ENCODE measurements at regions of chr11 and their contacts with region 1.

Region 1: DNA sequence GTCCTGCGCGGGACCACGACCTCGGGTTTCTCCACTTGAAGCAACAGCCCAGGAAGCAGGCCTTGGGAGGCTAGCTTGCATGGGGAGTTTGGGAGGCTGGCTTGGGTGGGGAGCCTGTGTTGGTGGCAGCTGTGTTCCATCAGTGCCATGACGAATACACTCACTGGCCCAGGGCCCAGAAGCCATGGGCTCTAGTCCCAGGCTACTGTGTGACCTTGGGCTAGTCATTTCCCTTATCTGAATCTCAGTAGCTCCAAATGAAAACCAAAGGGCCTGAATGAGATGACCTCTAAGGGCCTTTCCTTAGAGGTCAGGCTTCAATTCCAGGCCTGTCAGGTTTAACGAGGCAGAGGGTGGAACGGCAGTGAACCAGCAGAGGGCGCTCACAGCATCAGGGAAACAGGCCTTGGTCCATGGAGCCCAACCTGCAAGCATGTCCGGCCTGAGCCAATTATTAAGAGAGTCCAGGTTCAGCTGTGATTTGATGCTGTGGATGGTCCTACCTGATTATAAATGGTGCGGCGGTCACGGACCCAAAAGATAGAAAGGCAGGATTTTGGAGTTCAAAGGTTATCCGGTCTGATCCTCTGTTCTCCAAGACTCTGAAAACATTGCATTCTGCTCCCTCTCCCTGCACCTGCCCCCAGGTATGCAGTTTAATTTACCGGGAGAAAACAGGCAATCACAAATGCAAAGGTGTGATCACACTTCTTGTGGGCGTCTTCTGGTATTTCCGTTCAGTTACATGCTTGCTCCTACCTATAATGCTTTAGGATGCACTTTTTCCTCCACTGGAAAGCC is 15.9 kb downstream of the PTPN5 start:
- DNase-seq: peak; percentile 78
- H3K4me3 ChIP-seq: no peak overlapping the region
- H3K27ac ChIP-seq: no peak overlapping the region
- H3K4me1 ChIP-seq: no peaks in the 10 kb centered on the region
- H3K27me3 ChIP-seq: no peaks in the 10 kb centered on the region
- CTCF ChIP-seq: peak; percentile 59

Region 2: DNA sequence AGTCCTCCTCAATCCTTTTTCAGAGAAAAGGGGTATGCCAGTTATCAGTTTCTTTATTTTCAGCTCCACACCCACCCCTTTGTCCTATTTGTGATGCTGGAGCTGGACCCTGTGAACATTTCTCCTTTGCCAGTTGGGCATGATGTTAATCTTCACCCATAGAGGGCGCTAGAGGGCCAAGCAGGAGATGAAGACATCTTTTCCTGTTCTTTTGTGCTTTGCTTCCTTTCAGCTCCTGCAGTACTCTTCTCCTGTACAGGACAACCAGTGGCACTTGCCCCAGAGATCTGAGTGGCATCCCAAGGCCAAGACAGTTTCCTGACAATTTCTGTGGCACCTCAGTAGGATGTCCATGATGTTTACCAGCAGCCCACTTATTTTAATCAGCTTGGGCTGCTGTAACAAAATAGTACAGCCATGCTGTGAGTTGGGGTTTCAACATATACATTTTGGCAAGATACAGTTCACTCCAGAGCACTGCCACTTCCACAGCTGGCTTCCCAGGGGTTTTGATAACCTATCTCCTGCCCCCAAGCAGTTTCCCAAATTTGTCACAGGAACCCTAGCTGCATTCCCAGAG is 531.8 kb before region 1 on chr11:
- intact Hi-C with region 1: no loop called
- DNase-seq: peak; percentile 76
- H3K4me3 ChIP-seq: no peak overlapping the region
- H3K27ac ChIP-seq: no peak overlapping the region
- H3K4me1 ChIP-seq: no peaks in the 10 kb centered on the region
- H3K27me3 ChIP-seq: no peaks in the 10 kb centered on the region
- CTCF ChIP-seq: peak; percentile 78

Region 3: GRCh38 chr11:18853086-18853720 is 77.5 kb after region 1 on chr11:
- intact Hi-C with region 1: loop called (anchors 10 kb)
- DNase-seq: no peak
- H3K4me3 ChIP-seq: no peak overlapping the region
- H3K27ac ChIP-seq: no peak overlapping the region
- H3K4me1 ChIP-seq: no peaks in the 10 kb centered on the region
- H3K27me3 ChIP-seq: no peaks in the 10 kb centered on the region
- CTCF ChIP-seq: peak; percentile 12

Measured in colonic mucosa (tissue), 4 donors.